ENCODE measurements at regions of chr3 and their contacts with region 1.

Region 1: GRCh38 chr3:158644345-158644908 is at the start of gene GFM1:
- DNase-seq: peak; percentile 97 to 98 (median 97)
- H3K4me3 ChIP-seq: peak within 1 kb of the TSS; percentile 50 to 99 (median 89)
- H3K27ac ChIP-seq: peak within 1 kb of the TSS; percentile 77 to 88
- H3K4me1 ChIP-seq: peaks cover 0 to 12% (median 7%) of the 10 kb centered on the region in 4 experiments
- H3K27me3 ChIP-seq: no peaks in the 10 kb centered on the region

Region 2: DNA sequence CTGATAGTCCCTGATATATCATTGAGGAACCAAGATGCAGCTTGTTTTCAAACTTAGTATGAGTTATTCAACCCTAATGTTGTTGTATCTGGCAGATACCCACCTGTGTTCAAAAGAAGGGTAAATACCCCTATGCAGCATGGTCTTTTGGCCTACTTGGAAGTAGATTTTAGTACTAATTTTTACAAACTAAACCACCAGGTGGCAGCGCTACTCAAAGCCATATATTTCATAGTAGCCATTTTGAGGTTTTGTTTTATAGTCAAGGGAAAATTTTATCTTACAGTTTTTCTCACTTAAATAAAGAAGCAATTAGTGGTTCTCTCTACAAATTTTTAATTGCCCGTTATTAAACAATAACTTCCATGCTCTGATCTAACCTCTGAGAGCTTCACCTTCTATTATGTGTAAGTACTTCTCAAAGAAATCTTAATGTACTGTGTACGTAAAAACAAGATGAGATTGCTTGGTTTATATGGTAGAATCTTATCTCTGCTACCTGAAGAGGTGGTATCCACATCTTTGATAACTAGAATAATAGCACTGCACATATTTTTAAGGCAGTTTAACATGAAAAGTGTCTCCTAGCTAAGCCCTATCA is 104.9 kb before region 1 on chr3:
- CTCF ChIA-PET with region 1: interaction called, 10 read pairs
- POLR2A ChIA-PET with region 1: no interaction called
- DNase-seq: peak; percentile 73 to 86 (median 80)
- H3K4me3 ChIP-seq: no peak overlapping the region
- H3K27ac ChIP-seq: no peak overlapping the region
- H3K4me1 ChIP-seq: no peaks in the 10 kb centered on the region
- H3K27me3 ChIP-seq: no peaks in the 10 kb centered on the region

Region 3: GRCh38 chr3:158570999-158571974 is 73.1 kb before region 1 on chr3 and contains the start of gene MLF1:
- CTCF ChIA-PET with region 1: interaction called, 6 read pairs
- POLR2A ChIA-PET with region 1: interaction called, 10 read pairs
- DNase-seq: peak; percentile 92 to 95 (median 95)
- H3K4me3 ChIP-seq: peak within 1 kb of the TSS in 6 of 7 experiments; percentile 35 to 65 (median 54)
- H3K27ac ChIP-seq: peak within 1 kb of the TSS in 1 of 2 experiments; percentile 71
- H3K4me1 ChIP-seq: peaks cover 0 to 12% (median 9%) of the 10 kb centered on the region in 4 experiments
- H3K27me3 ChIP-seq: peaks cover 0 to 8% (median 2%) of the 10 kb centered on the region in 5 experiments

Region 4: GRCh38 chr3:158625881-158626280 is 18.5 kb before region 1 on chr3:
- CTCF ChIA-PET with region 1: no interaction called
- POLR2A ChIA-PET with region 1: no interaction called
- DNase-seq: no peak
- H3K4me3 ChIP-seq: no peak overlapping the region
- H3K27ac ChIP-seq: no peak overlapping the region
- H3K4me1 ChIP-seq: no peaks in the 10 kb centered on the region
- H3K27me3 ChIP-seq: peaks cover 0 to 2% (median 0%) of the 10 kb centered on the region in 5 experiments

Measured in common myeloid progenitor, CD34-positive (primary cell).